Pancreas (tissue), 10 donors: ENCODE measurements at regions of chr19 and their contacts with region 1.

Region 1: DNA sequence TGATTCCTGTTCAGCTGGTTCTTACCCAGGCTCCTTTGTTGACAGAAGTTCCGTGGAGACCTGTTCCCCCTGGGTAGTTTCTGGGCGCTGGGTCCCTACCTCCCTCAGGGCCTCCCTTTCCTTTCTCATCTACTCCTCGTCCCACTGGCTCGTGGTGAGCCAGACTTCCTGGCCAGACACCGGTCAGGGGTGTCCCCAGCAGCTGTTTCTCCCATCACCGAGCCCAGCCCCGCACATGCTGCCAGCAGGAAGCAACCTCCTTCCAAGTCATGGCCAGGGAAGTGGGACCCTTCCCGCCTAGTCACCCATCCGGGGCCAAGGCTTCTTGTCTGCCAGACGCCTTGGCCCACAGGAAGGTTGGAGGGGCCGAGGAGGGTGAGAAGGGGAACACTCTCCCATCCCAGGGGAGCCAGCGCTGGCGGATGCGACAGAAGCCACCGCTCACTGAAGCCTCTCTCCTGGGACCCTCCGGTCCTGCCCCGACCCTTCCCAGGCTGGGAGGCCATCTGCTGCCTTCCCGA is 5.7 kb downstream of the PAK4 start:
- DNase-seq: peak in 2 of 6 donors; percentile 41 to 76
- ATAC-seq: peak in 1 of 4 donors; percentile 1
- H3K4me3 ChIP-seq: no peak overlapping the region
- H3K27ac ChIP-seq: peak overlapping the region; percentile 13 to 78 (median 20)
- H3K4me1 ChIP-seq: peaks cover 30 to 48% (median 39%) of the 10 kb centered on the region in 3 donors
- H3K27me3 ChIP-seq: no peaks in the 10 kb centered on the region
- CTCF ChIP-seq: no peak

Region 2: GRCh38 chr19:38917516-38918491 is 213.5 kb before region 1 on chr19:
- intact Hi-C with region 1: no loop called
- DNase-seq: peak in 2 of 6 donors; percentile 24 to 55
- ATAC-seq: peak in 2 of 4 donors; percentile 15 to 32
- H3K4me3 ChIP-seq: no peak overlapping the region
- H3K27ac ChIP-seq: no peak overlapping the region
- H3K4me1 ChIP-seq: no peaks in the 10 kb centered on the region
- H3K27me3 ChIP-seq: no peaks in the 10 kb centered on the region
- CTCF ChIP-seq: no peak

Region 3: DNA sequence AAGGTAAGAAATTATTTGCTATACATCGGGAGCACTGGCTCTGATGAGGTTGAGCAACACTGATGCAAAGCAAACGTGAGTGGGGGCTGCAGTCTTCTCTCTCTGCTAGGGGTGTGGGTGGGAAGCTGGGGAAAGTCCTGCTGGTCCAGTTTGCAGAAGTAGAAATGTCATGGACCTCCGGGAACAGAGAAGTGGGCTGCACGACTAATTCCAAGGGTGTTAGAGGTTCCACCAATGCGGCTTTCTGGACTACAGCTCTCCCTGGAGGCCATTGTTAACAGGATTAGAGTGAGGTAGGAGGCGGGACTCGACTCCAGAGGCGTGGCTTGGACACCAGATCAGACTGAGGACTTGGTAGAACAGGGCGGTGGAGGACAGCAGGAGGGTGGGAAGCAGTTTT is 93.2 kb before region 1 on chr19:
- intact Hi-C with region 1: no loop called
- DNase-seq: peak; percentile 41 to 61 (median 53)
- ATAC-seq: peak; percentile 75 to 100 (median 96)
- H3K4me3 ChIP-seq: no peak overlapping the region
- H3K27ac ChIP-seq: no peak overlapping the region
- H3K4me1 ChIP-seq: no peaks in the 10 kb centered on the region
- H3K27me3 ChIP-seq: no peaks in the 10 kb centered on the region
- CTCF ChIP-seq: no peak

Region 4: GRCh38 chr19:39187559-39187957 is 56.3 kb after region 1 on chr19:
- intact Hi-C with region 1: loop called in 2 of 3 experiments (anchors 5 to 10 kb)
- DNase-seq: no peak
- ATAC-seq: peak in 3 of 4 donors; percentile 9 to 16 (median 16)
- H3K4me3 ChIP-seq: no peak overlapping the region
- H3K27ac ChIP-seq: no peak overlapping the region
- H3K4me1 ChIP-seq: no peaks in the 10 kb centered on the region
- H3K27me3 ChIP-seq: no peaks in the 10 kb centered on the region
- CTCF ChIP-seq: no peak